ENCODE measurements at regions of chr20 and their contacts with region 1.

Region 1: GRCh38 chr20:57380081-57380881 is 10.9 kb upstream of the RBM38 start:
- DNase-seq: peak; percentile 56

Region 2: GRCh38 chr20:57426831-57427230 is 46.5 kb after region 1 on chr20:
- intact Hi-C with region 1: loop called (anchors 1 kb)
- DNase-seq: no peak

Region 3: GRCh38 chr20:57498425-57499400 is 118.4 kb after region 1 on chr20:
- intact Hi-C with region 1: loop called (anchors 2 kb)
- DNase-seq: peak; percentile 78